ENCODE measurements at regions of chr19 and their contacts with region 1.

Region 1: GRCh38 chr19:18251587-18252369 is 22.5 kb downstream of the IQCN start:
- DNase-seq: peak; percentile 53 to 70
- ATAC-seq: peak; percentile 78 to 85
- H3K4me3 ChIP-seq: no peak overlapping the region
- H3K27ac ChIP-seq: no peak overlapping the region
- H3K4me1 ChIP-seq: no peaks in the 10 kb centered on the region
- CTCF ChIP-seq: peak; percentile 77
- EP300 ChIP-seq: no peak
- POLR2A ChIP-seq: no peak
- RAD21 ChIP-seq: peak; percentile 88 to 96

Region 2: GRCh38 chr19:18167975-18168645 is 83.7 kb before region 1 on chr19:
- CTCF ChIA-PET with region 1: interaction called, 11 read pairs
- POLR2A ChIA-PET with region 1: no interaction called
- DNase-seq: peak in 1 of 2 experiments; percentile 81
- ATAC-seq: peak; percentile 88 to 93
- H3K4me3 ChIP-seq: no peak overlapping the region
- H3K27ac ChIP-seq: no peak overlapping the region
- H3K4me1 ChIP-seq: peaks cover under 1% of the 10 kb centered on the region; the same call in 1 of the 3 replicates
- CTCF ChIP-seq: peak; percentile 51
- EP300 ChIP-seq: no peak
- POLR2A ChIP-seq: no peak
- RAD21 ChIP-seq: peak; percentile 52 to 58

Region 3: DNA sequence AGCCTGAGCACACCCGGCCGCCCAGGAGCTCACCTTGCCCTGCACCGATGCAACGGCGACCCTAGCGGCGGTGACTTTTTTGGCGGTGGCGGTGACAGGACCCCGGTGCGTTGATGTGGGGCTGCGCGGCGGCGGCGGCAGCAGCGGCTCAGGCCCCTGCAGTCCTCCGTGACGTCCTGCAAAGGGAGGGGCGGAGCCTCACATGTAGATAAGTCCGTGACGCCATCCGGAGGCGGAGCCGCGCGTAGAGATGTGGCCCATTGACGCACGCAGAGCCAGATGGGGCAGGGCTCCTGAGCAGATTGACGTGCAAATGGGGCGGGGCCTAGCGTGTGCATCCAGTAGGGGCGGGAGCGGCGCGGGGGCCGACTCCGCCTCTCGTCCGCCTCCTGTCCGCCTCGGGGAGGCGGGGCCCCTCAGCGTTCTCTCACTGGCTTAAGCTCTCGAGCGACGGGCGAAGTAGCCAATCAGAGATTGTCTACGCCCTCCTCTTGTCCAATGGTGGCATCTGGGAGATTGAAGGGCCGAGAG is 47.9 kb before region 1 on chr19 and contains the start of gene RAB3A:
- CTCF ChIA-PET with region 1: interaction called, 86 read pairs
- POLR2A ChIA-PET with region 1: interaction called, 4 read pairs
- DNase-seq: peak; percentile 92 to 100
- ATAC-seq: peak; percentile 93 to 96
- H3K4me3 ChIP-seq: peak within 1 kb of the TSS; percentile 57
- H3K27ac ChIP-seq: peak within 1 kb of the TSS; percentile 78 to 87
- H3K4me1 ChIP-seq: peaks cover 10% of the 10 kb centered on the region; the same call in 2 of the 3 replicates
- CTCF ChIP-seq: no peak
- EP300 ChIP-seq: no peak
- POLR2A ChIP-seq: no peak
- RAD21 ChIP-seq: no peak
- polyA plus RNA-seq, gene RAB3A: 0.39 and 1.0 TPM in 2 replicates

Region 4: GRCh38 chr19:18233224-18233825 is 18.5 kb before region 1 on chr19:
- CTCF ChIA-PET with region 1: interaction called, 34 read pairs
- POLR2A ChIA-PET with region 1: no interaction called
- DNase-seq: peak; percentile 50 to 69
- ATAC-seq: peak; percentile 66 to 72; a peak in 5 of 6 replicates
- H3K4me3 ChIP-seq: no peak overlapping the region
- H3K27ac ChIP-seq: no peak overlapping the region
- H3K4me1 ChIP-seq: peaks cover 20% of the 10 kb centered on the region
- CTCF ChIP-seq: no peak
- EP300 ChIP-seq: no peak
- POLR2A ChIP-seq: no peak
- RAD21 ChIP-seq: no peak

Region 5: GRCh38 chr19:18274781-18275356 is 23.1 kb after region 1 on chr19:
- CTCF ChIA-PET with region 1: interaction called, 14 read pairs
- POLR2A ChIA-PET with region 1: interaction called, 3 read pairs
- DNase-seq: peak; percentile 72 to 81
- ATAC-seq: peak; percentile 77 to 87
- H3K4me3 ChIP-seq: peak overlapping the region; percentile 25; the same call in 1 of the 3 replicates
- H3K27ac ChIP-seq: peak overlapping the region; percentile 88 to 94
- H3K4me1 ChIP-seq: peaks cover 52% of the 10 kb centered on the region
- CTCF ChIP-seq: no peak
- EP300 ChIP-seq: no peak
- POLR2A ChIP-seq: no peak
- RAD21 ChIP-seq: no peak

Region 6: DNA sequence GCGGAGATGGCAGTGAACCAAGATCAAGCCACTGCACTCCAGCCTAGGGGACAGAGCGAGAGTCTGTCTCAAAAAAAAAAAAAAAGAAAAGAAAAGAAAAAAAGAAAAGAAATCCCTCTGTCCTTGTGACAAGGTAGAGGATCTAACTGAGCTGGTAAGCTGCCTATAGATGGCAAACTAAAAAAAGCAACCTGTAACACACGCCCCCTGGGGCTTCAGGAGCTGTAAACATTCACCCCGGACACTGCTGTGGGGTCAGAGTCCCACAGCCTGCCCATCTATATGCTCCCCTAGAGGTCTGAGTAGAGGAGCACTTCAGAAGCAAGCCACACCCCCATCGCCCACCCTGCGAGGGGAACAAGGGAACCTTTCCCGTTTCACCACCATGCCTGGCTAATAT is 84.3 kb after region 1 on chr19:
- CTCF ChIA-PET with region 1: no interaction called
- POLR2A ChIA-PET with region 1: no interaction called
- DNase-seq: no peak
- ATAC-seq: no peak
- H3K4me3 ChIP-seq: no peak overlapping the region
- H3K27ac ChIP-seq: no peak overlapping the region
- H3K4me1 ChIP-seq: peaks cover 14% of the 10 kb centered on the region
- CTCF ChIP-seq: no peak
- EP300 ChIP-seq: no peak
- POLR2A ChIP-seq: no peak
- RAD21 ChIP-seq: no peak